ENCODE measurements at regions of chr1 and their contacts with region 1.

Region 1: DNA sequence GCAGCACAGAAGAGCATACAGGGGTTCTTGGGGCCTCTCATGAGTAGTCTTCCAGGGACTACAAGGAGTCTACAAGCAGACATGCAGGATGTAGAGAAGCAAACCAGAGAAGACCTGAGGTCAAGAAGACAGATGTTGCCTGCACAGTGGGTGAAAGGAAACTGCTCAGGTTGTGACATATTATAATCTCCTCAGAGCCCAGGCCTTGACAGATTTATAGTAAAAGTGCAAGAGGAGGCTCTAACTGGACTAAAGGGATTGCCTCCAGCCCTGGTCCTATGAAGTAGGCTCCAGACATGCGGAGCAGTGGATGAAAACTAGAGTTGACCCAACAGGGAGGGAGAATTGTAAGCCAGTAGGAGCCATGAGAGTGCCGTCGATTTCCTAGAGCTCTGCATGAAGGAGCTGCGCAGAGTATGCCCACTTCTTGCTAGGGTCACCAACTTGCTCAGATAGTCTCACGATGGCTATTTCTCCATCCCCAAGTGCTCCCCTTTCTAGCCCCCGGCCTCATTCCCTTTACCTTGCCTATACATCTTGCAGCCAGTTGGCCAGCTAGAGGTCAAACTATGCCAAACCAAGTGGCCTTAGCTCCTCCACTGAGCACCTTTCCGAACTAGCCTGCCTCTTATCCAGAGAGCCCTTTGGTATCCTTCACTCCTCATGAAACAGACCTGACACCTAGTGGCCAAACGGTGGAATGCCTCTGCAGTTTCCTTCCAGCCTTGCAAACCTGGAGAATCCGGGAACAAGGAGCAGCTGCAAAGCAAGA is 36.2 kb upstream of the IPO9 start:
- DNase-seq: peak; percentile 37
- H3K4me3 ChIP-seq: no peak overlapping the region
- CTCF ChIP-seq: peak; percentile 91

Region 2: DNA sequence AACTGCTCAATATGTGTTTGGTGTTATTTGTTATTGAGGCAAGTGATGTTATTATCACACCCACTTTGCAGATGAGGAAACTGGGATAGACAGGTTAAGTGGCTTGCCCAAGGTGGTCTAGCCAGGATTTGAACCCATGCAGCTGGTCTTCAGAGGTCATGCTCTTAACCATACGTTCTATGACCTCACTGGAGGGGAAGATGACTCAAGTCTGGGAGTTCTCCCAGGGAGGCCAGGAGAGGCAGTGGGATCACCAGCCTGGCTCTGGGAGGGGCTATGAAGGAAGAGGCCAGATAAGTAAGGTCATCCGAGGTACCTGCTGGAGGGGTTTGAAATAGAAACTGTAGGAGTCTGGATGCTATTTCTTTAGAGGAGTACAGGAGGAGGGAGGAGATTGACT is 158.5 kb before region 1 on chr1:
- CTCF ChIA-PET with region 1: interaction called, 12 read pairs
- POLR2A ChIA-PET with region 1: no interaction called
- DNase-seq: no peak
- H3K4me3 ChIP-seq: no peak overlapping the region
- CTCF ChIP-seq: no peak

Region 3: GRCh38 chr1:201739492-201740085 is 53.1 kb before region 1 on chr1:
- CTCF ChIA-PET with region 1: interaction called, 24 read pairs
- POLR2A ChIA-PET with region 1: no interaction called
- DNase-seq: no peak
- H3K4me3 ChIP-seq: peak overlapping the region; percentile 76
- CTCF ChIP-seq: no peak

Region 4: GRCh38 chr1:201756406-201756805 is 36.3 kb before region 1 on chr1:
- CTCF ChIA-PET with region 1: interaction called, 258 read pairs
- POLR2A ChIA-PET with region 1: interaction called, 3 read pairs
- DNase-seq: no peak
- H3K4me3 ChIP-seq: no peak overlapping the region
- CTCF ChIP-seq: no peak

Region 5: GRCh38 chr1:201807958-201808632 is 15.4 kb after region 1 on chr1:
- CTCF ChIA-PET with region 1: interaction called, 28 read pairs
- POLR2A ChIA-PET with region 1: no interaction called
- DNase-seq: no peak
- H3K4me3 ChIP-seq: no peak overlapping the region
- CTCF ChIP-seq: no peak